Mammary epithelial cell (primary cell): ENCODE measurements at regions of chr2 and their contacts with region 1.

Region 1: GRCh38 chr2:137570484-137570883 is 393.8 kb upstream of the HNMT start:
- DNase-seq: no peak
- H3K4me3 ChIP-seq: no peak overlapping the region
- H3K27ac ChIP-seq: no peak overlapping the region
- H3K4me1 ChIP-seq: no peaks in the 10 kb centered on the region
- H3K27me3 ChIP-seq: no peaks in the 10 kb centered on the region
- CTCF ChIP-seq: no peak

Region 2: GRCh38 chr2:137202318-137202717 is 368.2 kb before region 1 on chr2:
- CTCF ChIA-PET with region 1: no interaction called
- dilution Hi-C with region 1: no loop called
- in situ Hi-C with region 1: no loop called
- intact Hi-C with region 1: no loop called
- DNase-seq: peak; percentile 58
- H3K4me3 ChIP-seq: no peak overlapping the region
- H3K27ac ChIP-seq: no peak overlapping the region
- H3K4me1 ChIP-seq: no peaks in the 10 kb centered on the region
- H3K27me3 ChIP-seq: no peaks in the 10 kb centered on the region
- CTCF ChIP-seq: peak in 1 of 2 donors; percentile 25

Region 3: GRCh38 chr2:137493261-137493660 is 77.2 kb before region 1 on chr2:
- CTCF ChIA-PET with region 1: no interaction called
- dilution Hi-C with region 1: loop called (anchors 5 kb)
- in situ Hi-C with region 1: no loop called
- intact Hi-C with region 1: no loop called
- DNase-seq: no peak
- H3K4me3 ChIP-seq: no peak overlapping the region
- H3K27ac ChIP-seq: no peak overlapping the region
- H3K4me1 ChIP-seq: no peaks in the 10 kb centered on the region
- H3K27me3 ChIP-seq: no peaks in the 10 kb centered on the region
- CTCF ChIP-seq: no peak

Region 4: DNA sequence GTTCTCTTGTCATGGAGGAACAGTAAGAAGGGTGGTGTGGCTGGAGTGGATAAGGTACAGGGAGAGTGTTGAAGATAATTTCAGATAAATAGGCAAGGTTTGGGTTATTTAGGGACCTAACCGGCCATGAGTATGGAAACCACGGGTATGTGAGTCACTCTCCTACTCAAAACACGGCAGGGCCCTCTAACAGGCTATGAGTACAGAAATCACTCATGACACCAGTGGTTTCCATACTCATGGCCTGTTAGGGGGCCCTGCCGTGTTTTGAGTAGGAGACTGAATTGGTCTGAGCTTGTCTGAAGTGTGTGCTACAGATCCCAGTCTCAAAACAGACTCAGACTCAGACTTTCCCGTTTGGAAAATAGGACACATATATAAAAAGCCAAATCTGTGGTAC is 34.6 kb before region 1 on chr2:
- CTCF ChIA-PET with region 1: no interaction called
- dilution Hi-C with region 1: no loop called
- in situ Hi-C with region 1: no loop called
- intact Hi-C with region 1: no loop called
- DNase-seq: no peak
- H3K4me3 ChIP-seq: no peak overlapping the region
- H3K27ac ChIP-seq: no peak overlapping the region
- H3K4me1 ChIP-seq: no peaks in the 10 kb centered on the region
- H3K27me3 ChIP-seq: no peaks in the 10 kb centered on the region
- CTCF ChIP-seq: no peak